Activated CD4-positive, alpha-beta memory T cell treated with anti-CD3 and anti-CD28 coated beads for 36 hours (primary cell): ENCODE measurements at regions of chr18 and their contacts with region 1.

Region 1: GRCh38 chr18:25921677-25922421 is 168.6 kb downstream of the SS18 start:
- DNase-seq: peak; percentile 58
- H3K4me3 Mint-ChIP-seq: no peak overlapping the region
- H3K27ac Mint-ChIP-seq: no peak overlapping the region
- H3K4me1 Mint-ChIP-seq: no peaks in the 10 kb centered on the region
- H3K27me3 Mint-ChIP-seq: peaks cover 2% of the 10 kb centered on the region

Region 2: DNA sequence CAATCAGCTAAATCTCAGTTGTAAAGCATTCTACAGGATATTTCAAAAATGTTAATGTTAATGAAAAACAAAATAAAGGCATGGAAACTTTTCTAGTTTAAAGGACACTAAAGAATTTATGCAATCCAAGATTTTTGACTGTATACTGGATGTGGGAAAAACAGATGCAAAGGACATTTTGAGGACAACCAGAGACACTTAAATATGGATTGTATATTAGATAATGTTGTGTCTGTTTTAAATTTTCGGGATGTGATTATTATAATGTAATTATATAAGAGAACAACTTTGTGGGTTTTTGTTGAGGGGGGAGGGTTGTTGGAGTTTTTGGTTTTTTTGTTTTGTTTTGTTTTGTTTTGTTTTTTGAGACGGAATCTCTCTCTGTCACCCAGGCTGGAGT is 242.7 kb after region 1 on chr18:
- CTCF ChIA-PET with region 1: no interaction called
- POLR2A ChIA-PET with region 1: no interaction called
- intact Hi-C with region 1: loop called (anchors 5 kb)
- DNase-seq: no peak
- H3K4me3 Mint-ChIP-seq: no peak overlapping the region
- H3K27ac Mint-ChIP-seq: no peak overlapping the region
- H3K4me1 Mint-ChIP-seq: peaks cover under 1% of the 10 kb centered on the region
- H3K27me3 Mint-ChIP-seq: no peaks in the 10 kb centered on the region

Region 3: GRCh38 chr18:26335571-26336487 is 414.0 kb after region 1 on chr18:
- CTCF ChIA-PET with region 1: no interaction called
- POLR2A ChIA-PET with region 1: no interaction called
- intact Hi-C with region 1: loop called (anchors 5 kb)
- DNase-seq: no peak
- H3K4me3 Mint-ChIP-seq: no peak overlapping the region
- H3K27ac Mint-ChIP-seq: no peak overlapping the region
- H3K4me1 Mint-ChIP-seq: no peaks in the 10 kb centered on the region
- H3K27me3 Mint-ChIP-seq: no peaks in the 10 kb centered on the region